BJ (cell line): ENCODE measurements at regions of chr7 and their contacts with region 1.

Region 1: DNA sequence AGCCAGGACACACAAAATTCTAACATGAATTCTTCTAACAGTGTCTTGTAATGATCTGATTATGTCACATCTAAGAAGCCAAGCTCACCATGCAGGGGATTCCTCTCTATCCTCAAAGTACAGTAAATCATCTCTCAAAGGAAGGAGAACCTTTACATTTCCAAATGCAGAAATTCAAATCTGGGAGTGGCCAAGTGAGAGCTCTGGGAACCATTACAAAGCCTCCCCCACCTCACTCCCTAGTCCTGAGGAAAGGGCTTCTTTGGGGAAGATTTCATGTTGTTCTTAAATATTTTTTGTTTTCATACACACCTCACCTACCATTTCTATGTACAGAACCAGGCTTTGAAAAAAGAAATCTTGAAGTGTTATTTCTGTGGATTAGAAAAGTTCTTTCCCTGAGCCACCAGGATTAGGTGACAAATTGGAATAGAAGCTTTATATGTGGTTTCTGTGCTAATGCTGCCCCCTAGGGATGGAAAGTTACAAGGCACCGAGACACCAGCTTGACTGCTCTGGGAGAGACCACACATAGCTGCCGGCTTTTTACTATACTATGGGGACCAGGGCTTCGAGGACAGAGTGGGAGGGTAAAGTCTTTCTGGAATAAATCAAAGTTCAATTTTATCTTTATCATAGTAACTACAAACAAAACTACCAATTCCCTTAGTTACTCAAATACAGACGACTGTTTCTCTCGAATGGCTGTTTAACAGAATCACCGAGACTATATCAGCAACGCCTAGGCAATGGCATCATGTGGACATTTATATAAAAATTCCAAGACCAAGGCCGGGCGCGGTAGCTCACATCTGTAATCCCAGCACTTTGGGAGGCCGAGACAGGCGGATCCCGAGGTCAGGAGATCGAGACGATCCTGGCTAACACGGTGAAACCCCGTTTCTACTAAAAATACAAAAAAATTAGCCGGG is 116.1 kb downstream of the RNF216 start:
- DNase-seq: no peak
- H3K4me3 ChIP-seq: no peak overlapping the region
- H3K27me3 ChIP-seq: no peaks in the 10 kb centered on the region
- CTCF ChIP-seq: peak; percentile 80

Region 2: DNA sequence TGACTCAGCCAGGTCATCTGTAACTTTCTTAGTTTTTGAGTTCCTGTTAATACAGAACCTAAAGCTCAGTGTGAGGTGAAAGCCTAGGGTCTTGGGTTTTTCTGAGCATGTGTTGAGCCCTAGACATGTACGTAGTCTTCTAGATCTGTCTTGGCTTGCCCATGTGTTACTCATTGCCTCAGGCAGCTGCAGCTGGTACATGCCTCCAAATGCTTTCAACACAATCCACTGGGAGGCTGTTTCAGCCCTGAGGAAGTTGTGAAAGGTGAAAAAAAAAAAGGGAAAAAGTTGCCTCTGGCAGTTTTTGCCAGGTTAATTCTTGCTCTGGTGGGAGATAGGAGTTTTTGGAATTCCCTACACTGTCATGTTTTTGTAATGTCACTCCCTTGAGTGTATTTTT is 18.5 kb before region 1 on chr7:
- CTCF ChIA-PET with region 1: interaction called, 14 read pairs
- POLR2A ChIA-PET with region 1: no interaction called
- DNase-seq: no peak
- H3K4me3 ChIP-seq: no peak overlapping the region
- H3K27me3 ChIP-seq: no peaks in the 10 kb centered on the region
- CTCF ChIP-seq: no peak

Region 3: GRCh38 chr7:5677538-5678294 is 12.4 kb after region 1 on chr7:
- CTCF ChIA-PET with region 1: interaction called, 75 read pairs
- POLR2A ChIA-PET with region 1: no interaction called
- DNase-seq: no peak
- H3K4me3 ChIP-seq: no peak overlapping the region
- H3K27me3 ChIP-seq: no peaks in the 10 kb centered on the region
- CTCF ChIP-seq: peak; percentile 84

Region 4: GRCh38 chr7:5694912-5695726 is 29.8 kb after region 1 on chr7:
- CTCF ChIA-PET with region 1: interaction called, 13 read pairs
- POLR2A ChIA-PET with region 1: no interaction called
- DNase-seq: peak; percentile 53
- H3K4me3 ChIP-seq: peak overlapping the region; percentile 19
- H3K27me3 ChIP-seq: no peaks in the 10 kb centered on the region
- CTCF ChIP-seq: no peak

Region 5: DNA sequence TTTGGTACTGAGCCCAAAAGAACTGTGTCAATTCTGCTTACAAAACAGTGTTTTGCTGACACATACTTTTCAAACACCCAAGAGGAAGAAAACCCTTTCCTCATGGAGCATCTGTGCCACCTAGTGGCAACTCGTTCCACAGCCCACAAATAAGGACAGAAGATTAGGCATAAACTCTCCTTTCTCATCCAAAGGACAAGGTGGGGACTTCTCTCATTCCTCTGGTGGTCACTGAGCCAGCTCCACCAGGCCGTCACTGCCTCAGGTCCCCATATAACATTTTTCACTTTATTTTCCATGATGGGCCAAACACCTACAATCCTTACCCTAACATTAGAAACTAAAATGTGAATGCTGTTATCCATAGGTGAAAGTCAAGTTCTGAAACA is 39.2 kb after region 1 on chr7:
- CTCF ChIA-PET with region 1: interaction called, 26 read pairs
- POLR2A ChIA-PET with region 1: no interaction called
- DNase-seq: peak; percentile 41
- H3K4me3 ChIP-seq: no peak overlapping the region
- H3K27me3 ChIP-seq: no peaks in the 10 kb centered on the region
- CTCF ChIP-seq: peak; percentile 91